Transverse colon (tissue), 4 donors: ENCODE measurements at regions of chr21 and their contacts with region 1.

Region 1: DNA sequence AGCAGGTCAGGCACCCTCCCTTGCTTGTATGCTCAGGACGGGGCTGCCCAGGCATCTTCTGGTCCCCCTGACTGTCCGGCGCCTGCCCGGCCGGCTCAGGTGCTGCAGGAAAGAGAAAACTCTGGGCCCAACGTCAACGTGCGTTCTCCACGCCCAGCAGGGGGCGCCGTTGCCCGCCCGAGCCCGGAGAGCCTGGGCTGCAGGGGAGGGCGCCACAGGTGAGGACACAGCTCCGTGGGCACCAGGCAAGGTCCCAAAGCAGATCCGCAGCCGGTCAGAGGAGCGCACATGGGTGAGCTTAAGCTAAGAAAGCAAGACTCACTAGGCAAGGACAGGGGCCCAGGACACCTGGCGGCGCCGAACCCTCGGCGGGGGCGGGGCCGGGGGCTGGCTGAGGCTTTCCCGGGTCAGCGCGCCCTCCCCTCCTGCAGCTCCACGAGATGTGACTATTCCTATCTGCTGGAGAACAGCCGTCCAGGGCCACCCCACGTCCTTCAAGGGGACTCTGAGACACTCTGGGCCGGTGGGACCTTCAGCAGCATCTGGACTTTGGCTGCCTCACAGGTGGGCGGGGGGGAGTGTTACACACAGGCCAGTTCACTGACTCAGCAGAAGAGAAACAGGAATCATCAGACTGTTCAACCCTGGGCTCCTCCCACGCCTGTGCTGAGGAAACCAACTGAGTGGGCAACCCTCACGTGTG is 29.3 kb downstream of the KRTAP10-1 start:
- DNase-seq: peak; percentile 75
- H3K4me3 ChIP-seq: peak overlapping the region in 1 of 4 donors; percentile 27
- H3K27ac ChIP-seq: no peak overlapping the region
- H3K4me1 ChIP-seq: peaks cover 0 to 6% (median 3%) of the 10 kb centered on the region in 4 donors
- H3K27me3 ChIP-seq: peaks cover 19% of the 10 kb centered on the region
- CTCF ChIP-seq: peak; percentile 79 to 88 (median 84)
- EP300 ChIP-seq: no peak
- POLR2A ChIP-seq: no peak

Region 2: GRCh38 chr21:44531228-44532172 is 20.8 kb after region 1 on chr21:
- in situ Hi-C with region 1: no loop called
- intact Hi-C with region 1: no loop called
- DNase-seq: peak; percentile 2
- H3K4me3 ChIP-seq: no peak overlapping the region
- H3K27ac ChIP-seq: no peak overlapping the region
- H3K4me1 ChIP-seq: no peaks in the 10 kb centered on the region
- H3K27me3 ChIP-seq: no peaks in the 10 kb centered on the region
- CTCF ChIP-seq: no peak
- EP300 ChIP-seq: no peak
- POLR2A ChIP-seq: no peak

Region 3: DNA sequence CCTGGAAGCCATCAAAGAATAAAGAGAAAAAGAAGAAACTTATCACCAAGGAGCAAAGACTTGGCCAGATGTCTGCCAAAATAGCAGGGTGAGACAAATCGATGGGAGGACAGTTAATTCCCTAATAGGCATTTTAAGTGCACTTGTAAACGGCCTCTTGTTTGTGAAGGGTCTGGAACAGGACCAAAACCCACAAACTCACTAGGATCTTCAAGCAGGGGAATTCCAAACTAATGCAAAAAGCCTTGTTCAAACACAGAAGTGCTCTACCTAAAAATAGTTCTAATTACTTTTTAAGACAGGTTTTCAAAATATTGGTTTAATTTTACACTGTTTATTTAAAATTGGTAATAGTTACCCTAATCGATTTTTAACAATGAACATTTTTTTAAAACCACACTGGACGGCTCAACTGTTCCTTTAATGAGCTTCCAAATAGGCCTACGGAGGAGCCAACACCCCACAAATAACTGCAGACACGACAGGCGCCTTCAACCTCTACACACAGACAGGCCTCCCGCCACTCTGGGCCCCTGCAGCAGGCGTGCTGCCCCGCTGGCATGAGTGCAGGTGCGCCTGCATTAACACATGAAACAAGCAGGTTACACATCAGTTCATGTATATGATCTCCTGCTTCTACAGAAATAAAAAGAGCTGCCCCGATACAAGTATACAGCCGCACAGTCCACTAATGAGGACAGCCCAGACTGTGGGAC is 275.1 kb after region 1 on chr21:
- in situ Hi-C with region 1: loop called (anchors 5 to 25 kb)
- intact Hi-C with region 1: loop called (anchors 1 kb)
- DNase-seq: no peak
- H3K4me3 ChIP-seq: no peak overlapping the region
- H3K27ac ChIP-seq: no peak overlapping the region
- H3K4me1 ChIP-seq: peaks cover 0 to 14% (median 0%) of the 10 kb centered on the region in 4 donors
- H3K27me3 ChIP-seq: no peaks in the 10 kb centered on the region
- CTCF ChIP-seq: no peak
- EP300 ChIP-seq: no peak
- POLR2A ChIP-seq: no peak

Region 4: DNA sequence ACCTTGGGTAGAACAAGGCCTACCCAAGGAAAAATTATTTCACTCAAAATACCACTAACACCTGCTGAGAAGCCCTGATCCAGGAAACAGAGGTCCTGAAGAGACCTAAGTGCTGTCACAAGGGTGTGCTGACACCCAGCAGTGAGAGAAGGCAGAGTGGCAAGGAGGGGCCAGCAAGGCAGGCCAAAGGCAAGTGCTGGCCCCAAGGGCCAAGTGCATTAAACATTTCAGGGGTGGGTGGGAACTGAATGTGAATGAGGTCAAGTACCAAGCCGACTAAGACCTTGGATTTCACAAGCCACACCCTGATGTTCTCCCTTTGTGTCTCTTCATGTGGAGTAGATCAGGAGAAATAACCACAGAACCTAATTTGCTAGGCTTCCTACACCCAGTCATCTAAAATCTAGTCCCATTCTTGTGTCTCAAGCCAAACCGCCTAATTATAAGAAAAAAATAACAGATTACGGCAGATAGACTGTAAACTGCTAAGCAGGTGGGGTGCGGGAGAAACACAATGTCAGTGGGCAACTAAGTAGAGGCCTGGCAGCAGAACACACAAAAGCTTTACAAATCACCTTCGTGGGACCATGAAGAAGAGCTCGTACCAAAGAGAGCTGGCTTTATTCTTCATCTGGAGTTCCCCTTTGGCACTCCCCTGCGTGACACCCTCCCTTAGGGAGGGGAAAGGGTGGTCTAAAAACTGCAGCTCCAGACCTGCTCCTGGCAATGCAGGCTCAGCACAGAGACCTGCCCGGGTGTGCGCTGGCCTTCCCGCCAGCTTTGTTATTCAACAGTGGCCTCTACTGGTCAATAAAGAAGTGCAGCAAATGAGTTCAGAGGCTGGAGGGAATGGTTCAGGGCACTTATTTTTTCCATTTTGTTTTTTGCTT is 282.3 kb after region 1 on chr21:
- in situ Hi-C with region 1: loop called (anchors 5 to 25 kb)
- intact Hi-C with region 1: no loop called
- DNase-seq: peak; percentile 47
- H3K4me3 ChIP-seq: no peak overlapping the region
- H3K27ac ChIP-seq: no peak overlapping the region
- H3K4me1 ChIP-seq: peaks cover 3 to 24% (median 10%) of the 10 kb centered on the region in 4 donors
- H3K27me3 ChIP-seq: no peaks in the 10 kb centered on the region
- CTCF ChIP-seq: peak; percentile 77 to 79 (median 77)
- EP300 ChIP-seq: no peak
- POLR2A ChIP-seq: no peak